Right cardiac atrium (tissue), 5 donors: ENCODE measurements at regions of chr18 and their contacts with region 1.

Region 1: GRCh38 chr18:56575819-56576663 is 62.4 kb downstream of the TXNL1 start:
- DNase-seq: no peak
- ATAC-seq: peak; percentile 88 to 89
- H3K4me3 ChIP-seq: peak overlapping the region; percentile 15
- H3K27ac ChIP-seq: no peak overlapping the region
- H3K4me1 ChIP-seq: peaks cover 5% of the 10 kb centered on the region
- H3K27me3 ChIP-seq: no peaks in the 10 kb centered on the region

Region 2: GRCh38 chr18:55234366-55235093 is 1341.5 kb before region 1 on chr18:
- intact Hi-C with region 1: loop called in 1 of 4 experiments (anchors 10 kb)
- DNase-seq: peak; percentile 72 to 89 (median 83)
- ATAC-seq: peak; percentile 85 to 94
- H3K4me3 ChIP-seq: no peak overlapping the region
- H3K27ac ChIP-seq: peak overlapping the region; percentile 21
- H3K4me1 ChIP-seq: peaks cover 5% of the 10 kb centered on the region
- H3K27me3 ChIP-seq: no peaks in the 10 kb centered on the region

Region 3: DNA sequence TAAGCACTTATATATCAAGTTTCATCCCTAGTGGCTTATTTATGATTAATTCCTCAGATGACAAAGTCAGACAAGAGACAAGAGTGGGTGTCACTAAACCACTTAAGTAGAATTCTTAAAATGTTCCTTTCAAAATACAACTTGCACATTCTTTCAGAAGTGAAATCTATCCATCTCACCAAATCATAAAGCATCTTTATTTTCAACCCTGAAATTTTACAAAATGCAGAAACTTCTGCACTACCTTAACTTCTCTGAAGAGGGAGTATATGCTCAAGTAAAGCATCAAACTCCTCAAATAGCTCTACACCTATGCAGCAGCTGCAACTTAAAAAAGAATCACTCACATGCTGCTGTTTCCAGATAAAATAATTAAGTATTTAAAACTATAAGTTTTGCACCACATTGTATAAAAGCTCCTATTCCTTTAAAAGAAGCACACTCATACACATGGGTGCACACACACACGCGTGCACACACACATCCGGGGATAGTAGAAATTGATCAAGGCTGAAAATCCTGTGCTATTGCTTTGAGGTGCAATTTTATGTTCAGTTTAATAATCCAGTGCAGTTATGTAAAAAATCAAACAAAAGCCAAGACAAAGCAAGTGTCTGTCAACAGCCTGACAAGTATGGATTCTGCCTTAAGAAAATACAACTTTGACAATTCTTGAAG is 1232.5 kb before region 1 on chr18:
- intact Hi-C with region 1: loop called in 1 of 4 experiments (anchors 10 kb)
- DNase-seq: no peak
- ATAC-seq: peak; percentile 61 to 64
- H3K4me3 ChIP-seq: no peak overlapping the region
- H3K27ac ChIP-seq: no peak overlapping the region
- H3K4me1 ChIP-seq: peaks cover 4% of the 10 kb centered on the region
- H3K27me3 ChIP-seq: no peaks in the 10 kb centered on the region

Region 4: GRCh38 chr18:55589625-55590291 is 986.3 kb before region 1 on chr18:
- intact Hi-C with region 1: loop called in 1 of 4 experiments (anchors 10 kb)
- DNase-seq: peak; percentile 98 to 99 (median 99)
- ATAC-seq: peak; percentile 97 to 98
- H3K4me3 ChIP-seq: peak overlapping the region; percentile 100
- H3K27ac ChIP-seq: peak overlapping the region; percentile 71
- H3K4me1 ChIP-seq: peaks cover 2% of the 10 kb centered on the region
- H3K27me3 ChIP-seq: no peaks in the 10 kb centered on the region